Naive thymus-derived CD4-positive, alpha-beta T cell (primary cell): ENCODE measurements at regions of chr7 and their contacts with region 1.

Region 1: DNA sequence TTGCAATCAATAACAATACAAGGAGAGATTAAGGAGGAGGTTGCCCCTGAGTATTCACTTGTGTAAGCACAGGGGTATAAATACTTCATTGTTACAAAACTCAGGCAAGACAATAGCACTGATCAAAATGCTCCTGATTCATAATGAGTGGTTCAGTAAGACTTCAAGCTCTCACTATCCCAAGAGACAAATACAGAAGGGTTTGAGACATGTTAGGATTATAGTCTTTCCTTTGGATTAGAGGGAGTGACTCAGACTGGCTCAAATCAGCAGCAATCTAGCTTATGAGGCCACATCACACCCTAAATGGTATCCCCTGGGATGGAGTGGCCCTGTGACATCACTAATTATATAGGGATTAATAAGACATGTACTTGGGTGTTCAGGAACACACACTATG is 167.2 kb upstream of the HGF start:
- DNase-seq: no peak
- ATAC-seq: no peak
- H3K4me3 ChIP-seq: no peak overlapping the region
- H3K4me3 Mint-ChIP-seq: no peak overlapping the region
- H3K27ac ChIP-seq: no peak overlapping the region
- H3K27ac Mint-ChIP-seq: no peak overlapping the region
- H3K4me1 ChIP-seq: no peaks in the 10 kb centered on the region
- H3K4me1 Mint-ChIP-seq: no peaks in the 10 kb centered on the region
- H3K27me3 ChIP-seq: no peaks in the 10 kb centered on the region
- H3K27me3 Mint-ChIP-seq: no peaks in the 10 kb centered on the region

Region 2: DNA sequence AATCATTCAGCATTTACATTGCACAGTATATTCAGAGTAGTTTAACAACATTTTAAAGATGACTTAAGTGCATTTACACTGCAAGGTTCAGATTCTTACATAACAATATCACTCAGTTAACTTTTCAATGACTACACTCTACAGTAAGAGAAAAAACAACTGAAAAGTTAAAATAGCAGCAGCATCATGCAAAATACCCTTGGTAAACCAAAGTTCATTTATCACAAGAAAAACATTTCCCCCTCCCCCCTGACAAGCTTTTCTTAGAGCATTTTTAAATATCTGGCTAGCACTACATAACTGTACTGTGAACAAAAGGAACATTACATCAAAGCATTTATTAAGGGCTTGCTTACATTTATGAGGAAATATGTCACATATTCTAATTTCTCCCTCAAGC is 12.2 kb after region 1 on chr7:
- CTCF ChIA-PET with region 1: no interaction called
- POLR2A ChIA-PET with region 1: no interaction called
- intact Hi-C with region 1: loop called in 1 of 2 experiments (anchors 1 kb)
- DNase-seq: no peak
- ATAC-seq: no peak
- H3K4me3 ChIP-seq: no peak overlapping the region
- H3K4me3 Mint-ChIP-seq: no peak overlapping the region
- H3K27ac ChIP-seq: no peak overlapping the region
- H3K27ac Mint-ChIP-seq: no peak overlapping the region
- H3K4me1 ChIP-seq: no peaks in the 10 kb centered on the region
- H3K4me1 Mint-ChIP-seq: no peaks in the 10 kb centered on the region
- H3K27me3 ChIP-seq: no peaks in the 10 kb centered on the region
- H3K27me3 Mint-ChIP-seq: no peaks in the 10 kb centered on the region